Cardiac septum (tissue), 1 donor: ENCODE measurements at regions of chr3 and their contacts with region 1.

Region 1: DNA sequence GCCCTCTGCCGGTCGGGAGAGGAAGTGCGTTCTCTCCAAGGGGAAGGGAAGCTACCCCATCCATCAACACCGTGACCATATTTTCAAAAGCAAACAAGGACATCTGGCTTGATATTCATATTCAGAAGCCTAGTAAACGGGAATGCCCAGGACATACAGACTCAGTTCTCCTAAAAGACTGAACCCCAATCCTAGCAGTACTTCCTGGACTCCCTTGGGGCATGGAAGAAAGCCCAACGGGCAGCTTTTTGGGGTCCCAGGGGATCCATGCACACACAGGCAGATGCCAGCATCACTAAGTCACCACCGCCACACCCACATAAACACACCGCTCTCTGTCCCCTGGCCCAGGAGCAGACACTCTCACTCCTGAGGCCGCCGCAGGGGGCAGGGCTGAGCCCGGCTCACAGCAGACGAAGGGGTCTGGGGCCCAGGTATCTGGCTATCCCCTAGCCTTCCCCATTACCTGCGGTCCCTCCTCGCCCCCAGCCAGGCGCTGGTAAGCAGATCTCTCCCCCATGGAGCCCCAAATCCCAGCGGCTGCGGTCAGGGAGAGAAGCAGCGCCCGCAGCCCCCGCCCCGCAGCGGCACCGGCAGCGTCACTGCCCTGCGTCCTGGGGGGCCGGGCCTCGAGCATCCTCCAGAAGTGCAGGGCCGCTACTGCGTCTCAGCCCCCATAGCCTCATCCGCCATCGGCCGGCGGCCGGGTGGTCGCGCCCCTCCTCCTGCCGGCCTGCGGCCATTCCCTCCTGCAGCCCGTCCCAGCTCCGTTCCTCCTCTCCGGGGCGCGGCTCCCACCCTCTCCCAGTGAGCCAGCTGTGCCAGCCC is 13.4 kb downstream of the TNK2 start:
- DNase-seq: no peak

Region 2: DNA sequence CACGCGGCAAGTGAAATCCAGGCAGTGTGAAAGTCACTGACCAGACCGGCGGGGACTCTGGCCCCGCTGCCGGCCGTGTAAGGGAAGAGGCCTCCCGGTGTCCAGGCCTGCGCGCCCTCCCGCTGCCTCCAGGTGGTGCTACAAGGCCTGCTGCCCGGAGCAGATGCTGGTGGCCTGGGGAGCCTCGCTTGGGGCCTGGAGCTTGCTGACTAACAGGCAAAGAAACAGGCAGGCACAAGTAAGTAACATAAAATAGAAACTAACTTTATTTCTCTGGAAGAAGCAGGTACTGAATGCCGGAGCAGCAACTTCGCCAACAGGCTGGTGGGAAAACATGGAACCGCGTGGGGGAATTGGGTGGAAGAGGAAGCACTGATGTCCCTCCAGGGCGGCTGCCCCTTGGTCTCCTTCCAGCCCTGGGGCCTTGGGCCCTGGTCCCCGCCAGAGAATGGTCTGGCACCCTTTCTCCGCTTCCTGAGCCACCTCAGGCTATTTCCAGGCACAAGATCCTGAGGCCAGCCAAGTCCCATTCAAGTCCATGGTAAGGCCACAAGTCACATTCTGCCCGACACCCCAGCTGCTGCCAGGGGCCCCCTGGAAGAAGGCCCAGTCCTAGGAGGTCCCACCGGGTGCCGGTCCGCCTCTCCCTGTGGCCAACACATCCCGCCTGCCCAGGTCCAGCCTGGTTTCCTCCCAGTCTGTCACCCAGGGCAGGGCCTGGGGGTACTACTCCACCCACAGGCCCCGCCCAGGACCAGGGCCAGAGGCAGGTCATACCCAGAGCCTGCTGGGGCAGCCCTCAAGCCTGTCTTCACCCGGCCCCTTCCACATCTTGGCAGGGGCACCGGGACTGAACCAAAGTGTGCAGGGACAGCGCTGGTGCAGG is 31.6 kb before region 1 on chr3:
- intact Hi-C with region 1: loop called (anchors 1 kb)
- DNase-seq: peak; percentile 94

Region 3: GRCh38 chr3:195909644-195910508 is 14.9 kb after region 1 on chr3:
- intact Hi-C with region 1: loop called (anchors 2 kb)
- DNase-seq: peak; percentile 94